ENCODE measurements at regions of chr16 and their contacts with region 1.

Region 1: DNA sequence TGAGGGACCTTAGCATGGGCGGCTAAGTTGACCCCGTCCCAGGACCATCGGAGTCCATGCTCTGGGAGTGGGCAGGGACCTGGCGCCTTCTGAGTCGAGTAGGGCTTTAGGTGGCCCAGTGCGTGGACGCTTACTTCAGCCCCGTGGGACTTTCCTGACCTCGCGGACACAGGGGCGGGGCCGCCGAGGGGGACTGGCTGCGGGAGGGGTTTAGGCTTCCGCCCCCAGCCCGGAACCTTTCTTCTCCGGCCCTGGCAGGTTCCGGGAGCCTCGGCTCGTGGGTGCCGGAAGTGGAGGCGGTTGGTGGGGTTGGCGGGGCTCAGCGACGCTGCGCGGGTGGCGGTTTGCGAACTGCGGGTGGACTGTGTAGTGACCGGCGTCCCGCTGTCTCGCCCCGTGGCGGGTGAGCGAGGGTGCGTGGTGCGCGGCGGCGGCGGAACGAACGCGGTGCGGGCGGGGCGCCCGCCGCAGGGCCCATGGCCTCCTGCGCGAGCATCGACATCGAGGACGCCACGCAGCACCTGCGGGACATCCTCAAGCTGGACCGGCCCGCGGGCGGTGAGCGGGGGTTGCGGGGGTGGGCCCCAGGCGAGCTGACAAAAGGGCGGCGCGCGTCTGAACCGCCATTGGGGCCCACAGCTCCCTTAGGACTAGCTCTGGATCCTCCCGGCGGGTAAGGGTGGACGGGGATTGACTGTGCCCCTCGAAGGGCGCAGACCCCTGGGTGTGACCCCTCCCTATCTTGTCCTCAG is at the start of gene EDC4:
- DNase-seq: peak; percentile 93
- H3K4me3 Mint-ChIP-seq: peak within 1 kb of the TSS; percentile 95
- H3K27ac Mint-ChIP-seq: peak within 1 kb of the TSS; percentile 88
- H3K4me1 Mint-ChIP-seq: peaks cover 28% of the 10 kb centered on the region
- H3K27me3 Mint-ChIP-seq: no peaks in the 10 kb centered on the region
- total RNA-seq, gene EDC4: 88.6 to 94.2 TPM

Region 2: GRCh38 chr16:67537270-67537635 is 335.7 kb before region 1 on chr16:
- CTCF ChIA-PET with region 1: no interaction called
- POLR2A ChIA-PET with region 1: no interaction called
- intact Hi-C with region 1: no loop called
- DNase-seq: peak; percentile 74
- H3K4me3 Mint-ChIP-seq: peak overlapping the region; percentile 76
- H3K27ac Mint-ChIP-seq: peak overlapping the region; percentile 26
- H3K4me1 Mint-ChIP-seq: peaks cover 15% of the 10 kb centered on the region
- H3K27me3 Mint-ChIP-seq: no peaks in the 10 kb centered on the region

Region 3: GRCh38 chr16:67672739-67673662 is 200.0 kb before region 1 on chr16:
- CTCF ChIA-PET with region 1: interaction called, 5 read pairs
- POLR2A ChIA-PET with region 1: no interaction called
- intact Hi-C with region 1: loop called (anchors 5 kb)
- DNase-seq: peak; percentile 68
- H3K4me3 Mint-ChIP-seq: no peak overlapping the region
- H3K27ac Mint-ChIP-seq: no peak overlapping the region
- H3K4me1 Mint-ChIP-seq: no peaks in the 10 kb centered on the region
- H3K27me3 Mint-ChIP-seq: no peaks in the 10 kb centered on the region

Region 4: DNA sequence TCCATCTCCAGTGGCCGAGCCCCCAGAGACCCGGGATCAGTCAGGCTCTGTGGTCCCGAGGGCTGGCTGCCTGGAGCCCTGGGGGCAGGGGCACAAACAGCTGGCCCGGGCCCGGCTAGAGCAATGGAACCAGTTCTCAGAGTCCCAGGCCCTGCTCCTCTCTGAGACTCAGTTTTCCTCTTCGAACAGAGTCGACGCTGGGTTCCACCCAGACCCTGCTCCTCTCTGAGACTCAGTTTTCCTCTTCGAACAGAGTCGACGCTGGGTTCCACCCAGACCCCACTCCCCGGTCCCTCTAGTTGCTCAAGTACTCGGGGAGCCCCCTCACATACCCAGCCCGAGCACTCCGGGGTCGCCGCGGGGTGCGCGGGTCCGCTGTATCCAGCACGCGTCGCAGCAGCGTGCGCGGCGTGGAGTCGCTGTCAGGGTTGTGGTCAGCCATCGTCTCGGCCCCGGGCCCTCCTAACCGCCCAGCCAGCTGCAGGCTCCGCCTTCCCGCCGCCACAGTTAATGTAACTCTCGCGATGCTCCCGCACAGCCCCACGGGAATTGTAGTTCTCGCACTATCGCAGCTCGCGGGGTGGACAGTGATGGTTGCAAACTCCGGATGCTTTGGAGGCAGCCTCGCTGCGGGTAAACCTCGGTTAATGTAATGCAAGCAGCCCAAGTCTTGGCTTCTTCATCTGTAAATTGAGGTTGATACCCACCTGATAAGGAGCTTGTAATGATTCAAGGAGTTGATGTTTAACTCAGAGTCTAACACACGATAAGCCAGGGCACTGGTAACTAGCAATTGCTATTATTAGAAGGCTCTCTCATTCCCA is 39.3 kb before region 1 on chr16:
- CTCF ChIA-PET with region 1: no interaction called
- POLR2A ChIA-PET with region 1: interaction called, 3 read pairs
- intact Hi-C with region 1: loop called (anchors 5 kb)
- DNase-seq: peak; percentile 97
- H3K4me3 Mint-ChIP-seq: peak overlapping the region; percentile 89
- H3K27ac Mint-ChIP-seq: peak overlapping the region; percentile 39
- H3K4me1 Mint-ChIP-seq: peaks cover 8% of the 10 kb centered on the region
- H3K27me3 Mint-ChIP-seq: no peaks in the 10 kb centered on the region

Region 5: DNA sequence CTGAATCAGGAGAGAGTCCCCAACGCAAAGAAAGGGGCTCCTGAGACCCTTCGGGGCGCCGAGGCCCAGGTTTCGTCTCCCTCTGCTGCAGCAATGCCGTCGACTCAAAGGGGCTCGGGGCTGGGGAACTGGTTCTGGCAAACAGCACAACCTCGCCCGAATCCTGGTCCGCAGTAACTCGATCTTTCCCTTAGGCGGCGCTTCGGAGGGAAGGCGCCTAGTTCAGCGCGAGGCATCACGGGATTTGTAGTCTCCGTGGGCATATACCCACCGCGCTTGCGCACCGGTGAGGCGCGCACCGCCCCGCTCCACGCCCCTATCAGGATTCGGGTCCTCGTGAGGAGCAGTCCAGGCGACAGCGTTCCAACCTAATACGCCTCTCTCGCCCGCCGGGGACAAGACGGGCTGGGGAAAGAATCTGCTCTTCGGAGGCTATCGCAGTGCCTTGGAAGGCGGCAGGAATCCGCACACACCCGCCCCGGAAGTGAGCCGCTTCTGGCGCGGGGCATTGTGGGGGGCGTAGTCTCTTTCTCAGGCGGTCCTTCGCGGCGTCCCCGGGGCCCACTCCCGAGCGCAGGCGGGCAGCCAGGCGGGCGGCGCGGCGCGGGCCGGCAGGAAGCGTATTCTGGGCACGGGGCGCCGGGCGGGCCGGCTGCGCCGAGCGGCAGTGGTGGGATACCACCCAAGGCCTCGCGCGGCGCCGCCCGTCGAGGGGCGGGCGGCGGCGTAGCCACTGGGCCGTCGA is 31.0 kb before region 1 on chr16 and contains the start of gene THAP11:
- CTCF ChIA-PET with region 1: no interaction called
- POLR2A ChIA-PET with region 1: interaction called, 4 read pairs
- intact Hi-C with region 1: loop called (anchors 2 kb)
- DNase-seq: peak; percentile 97
- H3K4me3 Mint-ChIP-seq: peak within 1 kb of the TSS; percentile 90
- H3K27ac Mint-ChIP-seq: peak within 1 kb of the TSS; percentile 95
- H3K4me1 Mint-ChIP-seq: peaks cover 34% of the 10 kb centered on the region
- H3K27me3 Mint-ChIP-seq: no peaks in the 10 kb centered on the region
- total RNA-seq, gene THAP11: 31.8 to 32.1 TPM

Region 6: DNA sequence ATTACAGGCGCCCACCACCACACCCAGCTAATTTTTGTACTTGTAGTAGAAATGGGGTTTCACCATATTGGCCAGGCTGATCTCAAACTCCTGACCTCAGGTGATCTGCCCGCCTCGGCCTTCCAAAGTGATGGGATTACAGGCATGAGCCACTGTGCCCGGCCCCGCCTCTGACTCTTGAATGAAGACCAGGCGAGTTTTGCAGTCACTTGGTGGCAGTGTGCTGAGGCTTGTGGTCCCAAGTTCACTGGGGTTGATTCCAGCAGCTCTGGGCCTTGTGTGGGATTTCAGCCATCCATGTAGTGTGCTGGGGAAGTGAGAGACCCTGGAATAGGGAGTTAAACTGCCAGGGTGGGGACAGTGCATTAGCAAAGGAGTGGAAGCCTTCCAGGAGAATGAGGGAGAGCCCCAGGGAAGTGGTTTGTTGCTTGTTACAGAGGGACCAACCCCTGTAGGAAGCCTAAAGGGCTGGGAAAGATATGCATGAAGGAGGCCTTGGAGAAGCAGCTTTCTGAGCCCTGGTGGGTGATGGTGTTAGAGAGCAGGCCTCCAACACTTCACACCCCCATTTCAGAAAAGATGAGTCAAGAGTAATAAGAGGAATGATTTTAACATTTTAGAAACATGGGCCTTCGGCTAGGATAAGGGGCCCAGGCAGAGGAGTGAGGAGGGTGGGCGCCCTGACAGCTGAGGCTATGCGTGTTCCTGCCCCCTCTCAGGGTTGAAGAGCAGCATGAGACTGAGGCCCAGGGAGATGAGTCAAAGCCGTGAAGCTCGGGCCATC is 34.6 kb after region 1 on chr16:
- CTCF ChIA-PET with region 1: no interaction called
- POLR2A ChIA-PET with region 1: no interaction called
- intact Hi-C with region 1: no loop called
- DNase-seq: no peak
- H3K4me3 Mint-ChIP-seq: no peak overlapping the region
- H3K27ac Mint-ChIP-seq: peak overlapping the region; percentile 49
- H3K4me1 Mint-ChIP-seq: peaks cover 10% of the 10 kb centered on the region
- H3K27me3 Mint-ChIP-seq: no peaks in the 10 kb centered on the region

Region 7: GRCh38 chr16:67917852-67918236 is 44.9 kb after region 1 on chr16:
- CTCF ChIA-PET with region 1: interaction called, 3 read pairs
- POLR2A ChIA-PET with region 1: no interaction called
- intact Hi-C with region 1: loop called (anchors 2 kb)
- DNase-seq: peak; percentile 75
- H3K4me3 Mint-ChIP-seq: no peak overlapping the region
- H3K27ac Mint-ChIP-seq: peak overlapping the region; percentile 77
- H3K4me1 Mint-ChIP-seq: peaks cover 31% of the 10 kb centered on the region
- H3K27me3 Mint-ChIP-seq: no peaks in the 10 kb centered on the region

Region 8: DNA sequence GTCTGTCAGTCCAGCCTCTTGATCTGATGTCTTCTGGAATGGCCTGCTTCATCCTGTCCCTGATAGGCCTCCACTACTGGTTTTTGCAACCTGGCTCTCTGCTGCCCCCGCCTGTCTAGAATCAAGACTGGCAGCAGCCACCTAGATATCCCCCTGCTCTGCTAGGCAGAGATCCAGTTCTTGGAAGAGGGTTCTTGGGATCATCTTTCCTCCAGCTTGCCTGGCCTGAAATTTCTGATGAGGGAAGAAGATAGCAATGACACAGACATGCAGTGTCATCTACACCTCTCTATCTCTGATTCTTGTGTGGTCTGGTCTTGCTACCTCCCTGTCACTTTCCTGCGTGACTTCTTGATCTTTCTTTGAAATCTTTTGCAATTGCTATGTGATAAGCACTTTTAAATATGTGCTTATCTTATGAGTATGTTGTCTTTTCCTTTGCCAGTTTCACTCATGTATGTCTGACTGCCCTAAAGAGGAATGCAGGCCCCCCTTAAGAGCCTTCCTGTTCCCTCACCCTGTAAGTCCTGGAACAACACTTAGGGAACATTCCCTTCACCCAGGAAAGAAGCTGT is 191.9 kb after region 1 on chr16:
- CTCF ChIA-PET with region 1: no interaction called
- POLR2A ChIA-PET with region 1: no interaction called
- intact Hi-C with region 1: no loop called
- DNase-seq: peak; percentile 83
- H3K4me3 Mint-ChIP-seq: no peak overlapping the region
- H3K27ac Mint-ChIP-seq: peak overlapping the region; percentile 74
- H3K4me1 Mint-ChIP-seq: peaks cover 57% of the 10 kb centered on the region
- H3K27me3 Mint-ChIP-seq: no peaks in the 10 kb centered on the region